ENCODE measurements at regions of chr17 and their contacts with region 1.

Region 1: DNA sequence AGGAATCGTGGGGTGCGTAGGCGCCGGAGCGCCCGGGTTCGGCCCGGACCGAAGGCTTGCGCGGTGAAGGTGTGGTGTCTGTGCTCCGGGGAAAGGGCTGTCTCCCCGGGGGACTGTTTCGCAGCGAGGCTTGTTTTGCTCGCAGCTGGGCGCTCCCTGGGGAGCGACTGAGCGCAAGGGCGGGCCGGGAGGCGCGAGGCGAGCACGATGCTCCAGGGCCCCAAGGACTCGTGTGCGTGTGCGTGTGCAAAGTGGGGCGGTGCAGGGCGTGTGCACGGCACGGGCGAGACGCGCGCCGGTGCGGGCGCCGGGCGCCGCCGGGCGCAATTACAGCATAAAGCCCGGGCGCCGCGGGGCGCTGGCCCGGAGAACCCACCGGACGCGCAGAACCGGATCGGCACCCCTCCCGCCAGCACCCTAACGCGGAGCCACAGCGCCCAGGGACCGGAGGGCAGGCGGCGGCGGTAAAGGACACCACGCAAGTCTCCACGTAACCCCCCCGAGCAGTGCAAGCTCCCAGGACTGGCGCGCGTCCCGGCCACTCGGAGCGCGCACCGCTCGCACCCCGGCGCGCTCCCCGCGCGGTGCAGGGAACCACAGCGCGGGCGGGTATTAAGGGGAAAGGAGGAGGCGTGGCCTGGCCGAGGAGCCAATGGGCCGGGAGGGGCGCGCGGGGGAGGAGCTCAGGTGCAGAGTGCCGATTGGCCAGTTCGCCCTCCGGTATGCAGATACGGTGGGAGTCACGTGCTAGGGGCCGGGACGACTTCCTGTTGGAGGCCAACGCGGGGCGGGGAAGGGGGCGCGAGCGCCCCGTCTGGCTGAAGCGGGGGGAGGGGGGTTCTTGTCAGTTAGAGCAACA is at the start of gene TNRC6C:
- DNase-seq: peak; percentile 98 to 100 (median 100)
- ATAC-seq: peak; percentile 96
- H3K4me3 ChIP-seq: peak within 1 kb of the TSS; percentile 79
- H3K4me3 Mint-ChIP-seq: peak within 1 kb of the TSS; percentile 93 to 100 (median 96)
- H3K27ac ChIP-seq: peak within 1 kb of the TSS; percentile 82
- H3K27ac Mint-ChIP-seq: peak within 1 kb of the TSS; percentile 82 to 98 (median 95)
- H3K4me1 ChIP-seq: peaks cover 26 to 35% of the 10 kb centered on the region in 2 donors
- H3K4me1 Mint-ChIP-seq: peaks cover 26 to 43% (median 36%) of the 10 kb centered on the region in 7 donors
- H3K27me3 ChIP-seq: no peaks in the 10 kb centered on the region
- H3K27me3 Mint-ChIP-seq: peaks cover 0 to 46% (median 0%) of the 10 kb centered on the region in 5 donors
- total RNA-seq, gene TNRC6C: 28.6 to 133 (median 104) TPM

Region 2: GRCh38 chr17:77372444-77373298 is 585.4 kb before region 1 on chr17:
- CTCF ChIA-PET with region 1: no interaction called
- POLR2A ChIA-PET with region 1: interaction called, 7 read pairs
- intact Hi-C with region 1: loop called in 1 of 2 experiments (anchors 5 kb)
- DNase-seq: peak; percentile 44 to 82 (median 63)
- ATAC-seq: peak; percentile 60
- H3K4me3 ChIP-seq: peak overlapping the region; percentile 98
- H3K4me3 Mint-ChIP-seq: peak overlapping the region; percentile 80 to 100 (median 85)
- H3K27ac ChIP-seq: peak overlapping the region; percentile 80
- H3K27ac Mint-ChIP-seq: peak overlapping the region in 8 of 9 donors; percentile 84 to 93 (median 90)
- H3K4me1 ChIP-seq: peaks cover 44 to 54% of the 10 kb centered on the region in 2 donors
- H3K4me1 Mint-ChIP-seq: peaks cover 49 to 74% (median 65%) of the 10 kb centered on the region in 7 donors
- H3K27me3 ChIP-seq: no peaks in the 10 kb centered on the region
- H3K27me3 Mint-ChIP-seq: no peaks in the 10 kb centered on the region

Region 3: DNA sequence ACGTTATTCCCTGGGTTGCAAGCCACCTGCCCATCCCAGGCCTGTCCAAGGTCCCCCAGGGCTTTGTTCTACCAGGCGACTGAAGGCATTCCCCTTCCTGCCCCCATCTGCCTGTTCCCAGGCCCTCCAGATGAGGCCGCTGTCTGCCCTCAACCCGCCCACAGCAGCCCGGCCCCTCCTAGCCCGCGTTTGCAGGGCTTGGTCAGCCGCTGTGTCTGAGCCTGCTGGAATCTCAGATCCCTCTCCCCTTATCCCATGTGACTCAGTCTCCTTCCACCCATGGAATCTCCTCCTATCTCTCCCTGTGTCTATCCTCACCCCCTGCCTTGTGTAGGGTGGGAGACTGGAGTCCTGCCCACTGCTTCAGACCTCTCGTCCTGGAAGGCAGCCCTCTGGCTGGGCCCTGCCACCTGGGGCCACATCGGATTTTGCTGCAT is 185.6 kb before region 1 on chr17:
- CTCF ChIA-PET with region 1: interaction called, 5 read pairs
- POLR2A ChIA-PET with region 1: interaction called, 16 read pairs
- intact Hi-C with region 1: loop called in 1 of 2 experiments (anchors 1 kb)
- DNase-seq: peak; percentile 41 to 69 (median 57)
- ATAC-seq: peak; percentile 93
- H3K4me3 ChIP-seq: no peak overlapping the region
- H3K4me3 Mint-ChIP-seq: peak overlapping the region in 1 of 10 donors; percentile 8
- H3K27ac ChIP-seq: no peak overlapping the region
- H3K27ac Mint-ChIP-seq: peak overlapping the region in 5 of 9 donors; percentile 12 to 78 (median 74)
- H3K4me1 ChIP-seq: peaks cover 7 to 9% of the 10 kb centered on the region in 2 donors
- H3K4me1 Mint-ChIP-seq: peaks cover 12 to 15% (median 13%) of the 10 kb centered on the region in 7 donors
- H3K27me3 ChIP-seq: no peaks in the 10 kb centered on the region
- H3K27me3 Mint-ChIP-seq: peaks cover 0 to 17% (median 0%) of the 10 kb centered on the region in 5 donors

Region 4: GRCh38 chr17:77875881-77876509 is 82.1 kb before region 1 on chr17:
- CTCF ChIA-PET with region 1: interaction called, 3 read pairs
- POLR2A ChIA-PET with region 1: interaction called, 141 read pairs
- intact Hi-C with region 1: no loop called
- DNase-seq: no peak
- ATAC-seq: peak; percentile 85
- H3K4me3 ChIP-seq: no peak overlapping the region
- H3K4me3 Mint-ChIP-seq: peak overlapping the region in 7 of 10 donors; percentile 47 to 78 (median 48)
- H3K27ac ChIP-seq: no peak overlapping the region
- H3K27ac Mint-ChIP-seq: peak overlapping the region; percentile 14 to 89 (median 72)
- H3K4me1 ChIP-seq: peaks cover 38 to 95% of the 10 kb centered on the region in 2 donors
- H3K4me1 Mint-ChIP-seq: peaks cover 42 to 100% (median 89%) of the 10 kb centered on the region in 7 donors
- H3K27me3 ChIP-seq: no peaks in the 10 kb centered on the region
- H3K27me3 Mint-ChIP-seq: peaks cover 0 to 17% (median 0%) of the 10 kb centered on the region in 5 donors

Region 5: GRCh38 chr17:77990301-77990700 is 32.2 kb after region 1 on chr17:
- CTCF ChIA-PET with region 1: interaction called, 4 read pairs
- POLR2A ChIA-PET with region 1: interaction called, 27 read pairs
- intact Hi-C with region 1: no loop called
- DNase-seq: no peak
- ATAC-seq: no peak
- H3K4me3 ChIP-seq: no peak overlapping the region
- H3K4me3 Mint-ChIP-seq: peak overlapping the region in 5 of 10 donors; percentile 7 to 55 (median 40)
- H3K27ac ChIP-seq: no peak overlapping the region
- H3K27ac Mint-ChIP-seq: peak overlapping the region in 8 of 9 donors; percentile 1 to 81 (median 32)
- H3K4me1 ChIP-seq: peaks cover 0 to 16% of the 10 kb centered on the region in 2 donors
- H3K4me1 Mint-ChIP-seq: peaks cover 11 to 85% (median 74%) of the 10 kb centered on the region in 7 donors
- H3K27me3 ChIP-seq: no peaks in the 10 kb centered on the region
- H3K27me3 Mint-ChIP-seq: no peaks in the 10 kb centered on the region

Region 6: GRCh38 chr17:78128551-78129350 is 170.7 kb after region 1 on chr17 and contains the start of gene TMC6:
- CTCF ChIA-PET with region 1: no interaction called
- POLR2A ChIA-PET with region 1: interaction called, 32 read pairs
- intact Hi-C with region 1: loop called (anchors 1 kb)
- DNase-seq: peak in 8 of 9 donors; percentile 76 to 88 (median 82)
- ATAC-seq: peak; percentile 45
- H3K4me3 ChIP-seq: peak within 1 kb of the TSS; percentile 95
- H3K4me3 Mint-ChIP-seq: peak within 1 kb of the TSS; percentile 89 to 100 (median 99)
- H3K27ac ChIP-seq: peak within 1 kb of the TSS; percentile 77
- H3K27ac Mint-ChIP-seq: peak within 1 kb of the TSS; percentile 95 to 99 (median 97)
- H3K4me1 ChIP-seq: peaks cover 56 to 59% of the 10 kb centered on the region in 2 donors
- H3K4me1 Mint-ChIP-seq: peaks cover 19 to 53% (median 39%) of the 10 kb centered on the region in 7 donors
- H3K27me3 ChIP-seq: no peaks in the 10 kb centered on the region
- H3K27me3 Mint-ChIP-seq: peaks cover 0 to 3% (median 0%) of the 10 kb centered on the region in 5 donors
- total RNA-seq, gene TMC6: 574 to 808 (median 773) TPM

Region 7: GRCh38 chr17:78375401-78376151 is 417.5 kb after region 1 on chr17:
- CTCF ChIA-PET with region 1: no interaction called
- POLR2A ChIA-PET with region 1: no interaction called
- intact Hi-C with region 1: no loop called
- DNase-seq: no peak
- ATAC-seq: peak; percentile 43
- H3K4me3 ChIP-seq: no peak overlapping the region
- H3K4me3 Mint-ChIP-seq: peak overlapping the region in 1 of 10 donors; percentile 45
- H3K27ac ChIP-seq: no peak overlapping the region
- H3K27ac Mint-ChIP-seq: peak overlapping the region in 1 of 9 donors; percentile 16
- H3K4me1 ChIP-seq: peaks cover 16% of the 10 kb centered on the region in 2 donors
- H3K4me1 Mint-ChIP-seq: peaks cover 12 to 26% (median 14%) of the 10 kb centered on the region in 7 donors
- H3K27me3 ChIP-seq: no peaks in the 10 kb centered on the region
- H3K27me3 Mint-ChIP-seq: no peaks in the 10 kb centered on the region

Measured in naive thymus-derived CD4-positive, alpha-beta T cell (primary cell).